OCI-LY7 (cell line): ENCODE measurements at regions of chr19 and their contacts with region 1.

Region 1: DNA sequence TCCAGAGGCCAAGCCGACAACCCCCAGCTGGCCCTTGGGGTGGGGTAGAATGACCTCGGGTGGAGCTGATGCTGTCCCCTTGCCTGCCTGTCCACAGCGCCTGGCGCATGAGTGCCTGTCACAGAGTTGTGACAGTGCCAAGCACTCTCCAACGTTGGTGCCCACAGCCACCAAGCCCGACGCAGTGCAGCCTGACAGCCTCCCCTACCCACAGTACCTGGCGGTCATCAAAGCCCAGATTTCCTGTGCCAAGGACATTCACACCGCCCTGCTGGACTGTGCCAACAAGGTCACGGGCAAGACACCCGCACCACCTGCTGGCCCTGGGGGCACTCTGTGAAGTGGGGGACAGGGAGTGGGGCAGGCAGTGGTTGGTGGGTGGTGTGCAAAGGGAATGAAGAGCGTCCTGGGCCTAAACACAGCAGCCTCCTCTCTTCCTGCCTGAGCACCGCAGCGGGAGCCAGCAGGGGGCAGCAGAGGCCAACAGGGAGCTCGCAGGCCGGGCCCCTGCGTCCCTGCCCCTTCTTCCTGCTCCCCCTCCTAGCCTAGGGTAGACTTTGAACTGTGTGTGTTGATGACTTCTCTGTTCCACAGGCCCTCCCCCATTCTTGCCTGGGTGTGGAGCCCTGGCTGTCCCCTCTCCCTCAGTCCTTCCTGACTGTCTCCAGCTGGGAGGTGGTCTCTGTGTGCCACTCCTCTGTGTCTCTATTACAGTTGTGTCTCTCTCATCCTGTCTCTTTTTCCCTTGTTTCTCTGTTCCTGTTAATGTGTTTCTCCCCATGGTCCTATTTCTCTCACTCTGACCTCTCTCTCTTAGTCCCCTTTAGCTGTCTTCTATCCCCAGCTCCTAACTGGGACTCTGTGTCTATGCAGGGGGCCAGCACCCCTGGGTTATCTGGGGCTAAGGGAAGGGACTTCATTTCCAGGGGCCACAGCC is 6.5 kb downstream of the MED29 start:
- DNase-seq: peak; percentile 89
- H3K4me3 ChIP-seq: peak overlapping the region; percentile 27
- H3K27ac ChIP-seq: peak overlapping the region; percentile 75
- H3K4me1 ChIP-seq: peaks cover 57% of the 10 kb centered on the region
- CTCF ChIP-seq: peak; percentile 88

Region 2: DNA sequence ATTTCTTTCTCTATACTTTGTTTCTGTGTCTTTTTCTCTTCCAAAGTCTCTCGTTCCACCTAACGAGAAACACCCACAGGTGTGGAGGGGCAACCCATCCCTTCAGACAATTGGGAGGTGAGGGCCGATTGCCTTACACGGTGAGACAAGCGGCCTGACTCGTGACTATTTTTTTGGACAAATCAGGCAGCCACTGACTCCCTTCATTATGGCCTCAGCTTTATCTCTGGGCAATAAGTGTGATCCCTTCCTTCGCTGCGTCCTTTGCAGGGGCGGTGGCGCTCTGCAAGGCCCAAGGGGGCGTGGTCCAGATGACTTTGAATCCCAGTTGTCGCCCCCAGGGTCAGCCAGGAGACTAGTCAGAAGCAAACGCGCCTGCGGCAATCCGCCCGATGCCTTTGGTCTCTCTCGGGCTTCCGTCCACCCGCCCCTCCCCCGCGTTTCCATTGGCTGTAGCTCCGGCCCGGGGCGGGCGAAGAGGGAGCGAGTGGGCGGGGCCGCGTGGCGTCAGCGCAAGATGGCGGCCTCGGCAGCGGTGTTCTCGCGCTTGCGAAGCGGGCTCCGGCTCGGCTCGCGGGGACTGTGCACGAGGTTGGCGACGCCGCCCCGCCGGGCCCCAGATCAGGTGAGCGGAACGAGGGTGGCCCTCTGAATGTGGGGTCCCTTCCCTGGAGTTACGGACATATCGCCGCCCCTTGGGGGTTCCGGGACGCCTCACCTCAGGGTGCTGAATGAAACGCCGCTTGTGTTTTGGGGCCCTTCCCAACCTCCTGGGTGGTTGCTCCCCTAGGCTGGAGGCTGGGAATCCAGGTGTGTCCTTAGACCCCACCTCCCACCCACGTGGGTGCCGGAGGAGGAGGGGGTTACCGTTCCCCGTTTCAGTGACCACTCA is 83.0 kb after region 1 on chr19 and contains the start of gene TIMM50:
- CTCF ChIA-PET with region 1: interaction called, 15 read pairs
- POLR2A ChIA-PET with region 1: no interaction called
- intact Hi-C with region 1: no loop called
- DNase-seq: peak; percentile 98
- H3K4me3 ChIP-seq: peak within 1 kb of the TSS; percentile 91
- H3K27ac ChIP-seq: peak within 1 kb of the TSS; percentile 57
- H3K4me1 ChIP-seq: peaks cover 17% of the 10 kb centered on the region
- CTCF ChIP-seq: no peak
- total RNA-seq, gene TIMM50: 98.1 and 116 TPM in 2 replicates

Region 3: GRCh38 chr19:39951686-39952085 is 554.1 kb after region 1 on chr19:
- CTCF ChIA-PET with region 1: no interaction called
- POLR2A ChIA-PET with region 1: no interaction called
- intact Hi-C with region 1: loop called (anchors 10 kb)
- DNase-seq: no peak
- H3K4me3 ChIP-seq: no peak overlapping the region
- H3K27ac ChIP-seq: peak overlapping the region; percentile 96
- H3K4me1 ChIP-seq: peaks cover 63% of the 10 kb centered on the region
- CTCF ChIP-seq: no peak